CD4-positive, alpha-beta T cell (primary cell): ENCODE measurements at regions of chr1 and their contacts with region 1.

Region 1: DNA sequence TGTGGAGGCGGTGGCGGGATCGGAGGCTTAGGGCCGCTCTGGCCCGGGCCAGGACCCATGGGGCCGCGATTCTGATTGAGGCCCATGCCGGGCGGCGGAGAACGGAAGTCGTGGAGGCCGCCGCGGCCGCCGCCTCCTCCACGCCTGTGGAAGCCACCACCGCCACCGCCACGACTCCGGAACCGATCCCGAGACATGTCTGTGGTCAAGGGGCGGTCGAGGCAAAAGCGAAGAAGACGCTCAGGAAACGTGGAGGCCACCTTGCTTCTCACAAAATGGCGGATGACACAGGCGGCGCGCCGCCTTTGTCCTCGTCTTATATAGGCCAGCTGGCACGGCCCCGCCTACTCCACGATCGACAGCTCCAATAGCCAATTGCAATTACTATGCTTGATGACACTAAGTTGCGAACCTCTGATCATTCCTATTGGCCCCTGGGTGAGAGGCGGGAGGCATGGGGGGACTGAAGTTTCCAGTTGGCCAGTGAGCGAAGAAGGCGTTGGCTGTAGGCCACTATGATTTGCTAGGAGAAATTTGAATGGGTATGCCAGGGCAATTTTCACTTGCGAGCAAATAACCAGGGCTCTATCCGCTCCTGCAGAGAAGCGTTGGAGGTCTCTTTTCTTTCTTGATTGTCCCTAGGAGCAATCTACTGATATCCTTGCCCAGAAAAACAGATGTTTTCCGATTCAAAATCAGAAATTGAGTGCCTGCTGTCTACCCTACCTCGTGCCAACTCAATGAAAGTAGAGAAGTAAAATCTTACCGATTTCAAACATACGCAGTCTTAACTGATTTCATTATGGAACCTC is at the start of gene SFPQ:
- DNase-seq: peak; percentile 95 to 99 (median 97)
- ATAC-seq: peak; percentile 88
- H3K4me3 ChIP-seq: peak within 1 kb of the TSS; percentile 95
- H3K4me3 Mint-ChIP-seq: peak within 1 kb of the TSS; percentile 97
- H3K27ac ChIP-seq: peak within 1 kb of the TSS; percentile 98 to 99
- H3K27ac Mint-ChIP-seq: peak within 1 kb of the TSS; percentile 97
- H3K4me1 ChIP-seq: peaks cover 32% of the 10 kb centered on the region
- H3K4me1 Mint-ChIP-seq: peaks cover 53% of the 10 kb centered on the region
- H3K27me3 ChIP-seq: no peaks in the 10 kb centered on the region
- H3K27me3 Mint-ChIP-seq: no peaks in the 10 kb centered on the region
- CTCF ChIP-seq: no peak
- total RNA-seq, gene SFPQ: 766 to 767 TPM

Region 2: DNA sequence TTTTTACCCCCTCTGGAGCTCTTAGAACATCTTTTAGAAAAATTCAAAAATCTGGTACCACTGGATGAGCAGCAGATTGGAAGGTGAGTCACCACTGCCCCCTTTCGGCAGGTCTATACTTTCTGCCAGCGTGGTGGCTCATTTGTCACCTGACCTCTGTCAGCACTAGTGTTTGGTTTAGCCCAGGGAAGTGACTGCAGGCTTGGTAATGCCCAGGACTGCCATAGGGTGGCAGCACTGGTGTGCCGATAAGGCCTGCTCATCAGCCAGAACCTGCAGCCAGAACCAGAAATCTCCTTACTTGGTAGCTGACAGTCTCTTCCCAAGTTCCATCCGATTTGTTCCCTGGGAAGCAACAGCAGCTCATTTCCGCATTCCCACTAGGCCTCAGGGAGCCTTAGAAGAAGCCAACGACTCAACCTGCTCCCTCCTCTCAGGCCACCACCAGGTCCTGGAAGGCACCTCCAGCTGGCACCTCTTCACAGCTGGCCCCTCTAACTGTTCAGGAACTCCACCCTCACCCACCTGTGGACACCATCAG is 340.3 kb before region 1 on chr1:
- CTCF ChIA-PET with region 1: no interaction called
- POLR2A ChIA-PET with region 1: no interaction called
- intact Hi-C with region 1: loop called in 1 of 2 experiments (anchors 10 kb)
- DNase-seq: peak; percentile 74 to 96 (median 84)
- ATAC-seq: peak; percentile 100
- H3K4me3 ChIP-seq: no peak overlapping the region
- H3K4me3 Mint-ChIP-seq: no peak overlapping the region
- H3K27ac ChIP-seq: no peak overlapping the region
- H3K27ac Mint-ChIP-seq: peak overlapping the region; percentile 48
- H3K4me1 ChIP-seq: peaks cover 9% of the 10 kb centered on the region
- H3K4me1 Mint-ChIP-seq: peaks cover 26% of the 10 kb centered on the region
- H3K27me3 ChIP-seq: no peaks in the 10 kb centered on the region
- H3K27me3 Mint-ChIP-seq: no peaks in the 10 kb centered on the region
- CTCF ChIP-seq: peak; percentile 92

Region 3: DNA sequence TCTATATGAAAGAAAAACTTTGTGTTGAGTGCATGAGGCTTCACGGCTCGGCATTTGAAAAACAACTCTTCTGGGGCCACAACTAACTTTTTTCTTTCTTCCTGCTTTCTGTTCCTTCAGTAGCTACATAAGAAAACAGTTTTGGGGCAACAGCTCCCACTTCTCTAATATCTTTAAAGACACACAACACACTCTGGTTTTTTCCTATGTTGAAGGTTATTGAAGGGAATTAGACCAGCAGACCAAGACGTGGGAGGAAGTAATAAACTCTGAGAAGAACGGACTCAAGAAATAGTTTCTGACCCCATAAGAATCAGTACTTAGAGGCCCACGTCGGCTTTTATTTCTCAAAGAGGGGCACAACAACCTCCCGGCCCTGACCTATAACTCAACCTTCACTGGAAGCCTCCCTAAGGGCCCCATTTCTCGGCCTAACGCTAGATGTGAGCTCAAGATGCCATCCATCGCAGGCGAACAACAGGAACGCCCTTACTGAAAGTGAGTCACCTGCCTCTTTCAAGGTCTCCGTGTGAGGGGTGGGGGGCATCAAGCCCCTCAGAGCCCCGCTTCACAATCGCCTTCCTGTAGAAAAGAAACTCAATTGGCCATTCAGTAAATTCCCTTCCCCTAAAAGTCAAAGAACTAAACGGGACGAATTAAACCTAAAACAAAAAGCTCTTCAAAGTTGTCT is 162.2 kb before region 1 on chr1:
- CTCF ChIA-PET with region 1: interaction called, 3 read pairs
- POLR2A ChIA-PET with region 1: interaction called, 6 read pairs
- intact Hi-C with region 1: loop called in 1 of 2 experiments (anchors 5 kb)
- DNase-seq: peak; percentile 10 to 55 (median 30)
- ATAC-seq: peak; percentile 52
- H3K4me3 ChIP-seq: peak overlapping the region; percentile 92
- H3K4me3 Mint-ChIP-seq: peak overlapping the region; percentile 98
- H3K27ac ChIP-seq: peak overlapping the region; percentile 66 to 73
- H3K27ac Mint-ChIP-seq: peak overlapping the region; percentile 89
- H3K4me1 ChIP-seq: peaks cover 26% of the 10 kb centered on the region
- H3K4me1 Mint-ChIP-seq: peaks cover 47% of the 10 kb centered on the region
- H3K27me3 ChIP-seq: no peaks in the 10 kb centered on the region
- H3K27me3 Mint-ChIP-seq: no peaks in the 10 kb centered on the region
- CTCF ChIP-seq: no peak

Region 4: DNA sequence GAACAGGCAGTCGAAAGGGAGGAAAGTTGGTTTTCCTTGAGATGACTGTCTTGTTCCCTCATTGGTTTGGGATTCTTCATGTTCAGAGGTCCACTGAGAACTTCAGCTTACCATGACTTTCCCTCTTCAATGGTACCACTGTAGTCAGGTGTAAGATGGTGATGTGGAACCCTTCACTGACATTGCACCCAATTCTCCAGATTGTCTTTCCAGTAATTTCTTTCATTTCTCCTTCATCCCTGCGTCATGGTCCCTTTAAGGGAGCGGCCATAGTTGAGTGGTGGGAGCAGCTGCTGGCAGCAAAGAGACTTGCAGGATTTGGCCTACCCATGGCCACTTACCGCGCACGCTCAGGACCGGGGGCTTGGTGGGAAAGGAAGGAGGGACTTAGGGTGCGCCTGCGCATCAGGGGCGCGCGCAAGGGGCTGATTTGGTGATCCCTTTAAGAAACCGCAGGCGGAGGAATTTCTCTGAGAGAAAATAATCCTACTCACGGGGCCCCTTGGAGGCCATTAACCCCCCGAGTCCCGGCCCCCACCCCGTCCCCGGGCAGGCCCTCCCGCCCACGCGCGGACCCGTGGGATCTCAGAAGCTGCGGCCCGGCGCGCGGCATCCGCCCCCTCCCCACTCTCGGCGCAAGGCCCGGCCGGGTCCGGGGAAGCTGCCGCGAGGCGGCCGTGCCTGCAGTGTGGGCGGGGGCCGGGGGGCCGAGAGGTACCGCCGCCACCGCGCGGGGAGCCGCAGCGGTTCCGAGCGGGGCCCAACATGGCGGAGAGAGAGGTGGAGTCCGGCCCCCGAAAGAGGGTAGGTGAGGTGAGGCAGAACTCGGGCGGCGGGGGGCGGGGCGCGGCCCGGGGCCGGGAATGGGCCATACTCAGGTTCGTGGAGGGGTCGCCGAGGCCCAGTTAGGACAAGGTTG is 75.5 kb after region 1 on chr1 and contains the start of gene ZMYM4:
- CTCF ChIA-PET with region 1: no interaction called
- POLR2A ChIA-PET with region 1: interaction called, 10 read pairs
- intact Hi-C with region 1: loop called in 1 of 2 experiments (anchors 1 kb)
- DNase-seq: peak; percentile 74 to 96 (median 86)
- ATAC-seq: peak; percentile 95
- H3K4me3 ChIP-seq: peak within 1 kb of the TSS; percentile 71
- H3K4me3 Mint-ChIP-seq: peak within 1 kb of the TSS; percentile 98
- H3K27ac ChIP-seq: peak within 1 kb of the TSS in 1 of 2 donors; percentile 55
- H3K27ac Mint-ChIP-seq: peak within 1 kb of the TSS; percentile 87
- H3K4me1 ChIP-seq: peaks cover 6% of the 10 kb centered on the region
- H3K4me1 Mint-ChIP-seq: peaks cover 41% of the 10 kb centered on the region
- H3K27me3 ChIP-seq: peaks cover 0 to 3% of the 10 kb centered on the region in 2 experiments
- H3K27me3 Mint-ChIP-seq: peaks cover 9% of the 10 kb centered on the region
- CTCF ChIP-seq: no peak
- total RNA-seq, gene ZMYM4: 37.0 to 39.9 TPM

Region 5: DNA sequence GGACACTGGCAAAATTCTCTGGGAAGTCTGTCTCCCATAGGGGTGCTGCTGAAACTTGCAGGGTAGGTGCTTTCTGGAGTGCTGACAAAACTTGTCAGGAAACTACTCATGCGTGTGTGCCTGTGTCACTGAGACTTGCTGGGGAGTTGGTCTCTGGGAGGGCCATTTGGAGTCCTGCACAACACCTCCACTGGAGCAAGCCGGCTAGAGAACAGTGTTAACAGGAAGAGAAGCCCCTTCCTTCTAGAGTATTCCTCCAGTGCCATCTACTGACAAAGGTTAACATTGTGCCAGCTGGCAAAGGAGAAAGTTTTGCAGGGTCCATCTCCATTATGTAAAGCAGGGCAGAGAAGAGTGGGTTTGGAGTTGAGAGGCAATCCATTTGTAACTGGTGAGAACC is 105.4 kb after region 1 on chr1:
- CTCF ChIA-PET with region 1: no interaction called
- POLR2A ChIA-PET with region 1: no interaction called
- intact Hi-C with region 1: no loop called
- DNase-seq: peak in 11 of 14 experiments; percentile 1 to 70 (median 10)
- ATAC-seq: peak; percentile 94
- H3K4me3 ChIP-seq: no peak overlapping the region
- H3K4me3 Mint-ChIP-seq: no peak overlapping the region
- H3K27ac ChIP-seq: no peak overlapping the region
- H3K27ac Mint-ChIP-seq: no peak overlapping the region
- H3K4me1 ChIP-seq: no peaks in the 10 kb centered on the region
- H3K4me1 Mint-ChIP-seq: peaks cover 11% of the 10 kb centered on the region
- H3K27me3 ChIP-seq: no peaks in the 10 kb centered on the region
- H3K27me3 Mint-ChIP-seq: no peaks in the 10 kb centered on the region
- CTCF ChIP-seq: peak; percentile 63

Region 6: GRCh38 chr1:35769188-35769758 is 576.2 kb after region 1 on chr1:
- CTCF ChIA-PET with region 1: no interaction called
- POLR2A ChIA-PET with region 1: interaction called, 3 read pairs
- intact Hi-C with region 1: loop called in 1 of 2 experiments (anchors 10 kb)
- DNase-seq: peak; percentile 60 to 92 (median 75)
- ATAC-seq: peak; percentile 79
- H3K4me3 ChIP-seq: peak overlapping the region; percentile 85
- H3K4me3 Mint-ChIP-seq: peak overlapping the region; percentile 97
- H3K27ac ChIP-seq: peak overlapping the region; percentile 68 to 78
- H3K27ac Mint-ChIP-seq: peak overlapping the region; percentile 72
- H3K4me1 ChIP-seq: peaks cover 13% of the 10 kb centered on the region
- H3K4me1 Mint-ChIP-seq: peaks cover 13% of the 10 kb centered on the region
- H3K27me3 ChIP-seq: no peaks in the 10 kb centered on the region
- H3K27me3 Mint-ChIP-seq: no peaks in the 10 kb centered on the region
- CTCF ChIP-seq: no peak